Naive thymus-derived CD4-positive, alpha-beta T cell (primary cell): ENCODE measurements at regions of chr7 and their contacts with region 1.

Region 1: DNA sequence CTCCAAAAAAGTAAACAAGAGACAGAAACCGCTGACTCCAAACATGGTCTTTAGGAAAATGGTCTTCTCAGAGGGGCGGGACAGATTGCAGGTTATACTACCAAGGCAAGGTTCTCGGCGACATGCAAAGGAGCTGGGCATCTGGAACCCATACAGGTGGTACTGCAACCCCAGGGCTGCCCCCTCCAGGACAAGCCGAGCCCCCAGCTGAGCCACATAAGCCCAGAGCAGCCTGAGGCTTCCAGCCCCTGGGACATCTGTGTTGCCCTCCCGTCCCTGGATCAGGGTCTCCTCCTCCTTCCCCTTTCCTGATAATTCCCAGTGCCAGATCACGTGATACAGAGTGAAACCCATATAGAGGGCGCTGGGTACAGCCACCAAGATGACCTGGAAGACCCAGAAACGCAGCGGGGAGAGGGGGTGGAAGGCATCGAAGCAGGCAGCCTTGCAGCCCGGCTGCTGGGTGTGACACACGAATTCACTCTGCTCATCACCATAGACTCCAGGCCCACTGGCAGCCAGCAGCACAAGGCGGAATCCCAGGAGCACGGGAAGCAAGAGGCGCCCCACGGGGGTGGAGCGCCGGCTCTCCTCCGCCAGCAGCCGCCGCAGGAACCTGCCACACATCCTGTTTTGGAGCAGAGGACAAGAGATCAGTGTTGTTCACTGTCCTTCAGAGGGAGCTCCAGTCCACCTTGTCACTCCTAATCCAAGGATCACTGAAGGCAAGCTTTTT is at the start of gene GJC3:
- DNase-seq: peak in 8 of 9 donors; percentile 27 to 61 (median 52)
- ATAC-seq: peak; percentile 90
- H3K4me3 ChIP-seq: peak within 1 kb of the TSS; percentile 27
- H3K4me3 Mint-ChIP-seq: peak within 1 kb of the TSS; percentile 80 to 87 (median 84)
- H3K27ac ChIP-seq: peak within 1 kb of the TSS; percentile 29
- H3K27ac Mint-ChIP-seq: peak within 1 kb of the TSS; percentile 48 to 93 (median 85)
- H3K4me1 ChIP-seq: peaks cover 0 to 16% of the 10 kb centered on the region in 2 donors
- H3K4me1 Mint-ChIP-seq: peaks cover 17 to 33% (median 33%) of the 10 kb centered on the region in 7 donors
- H3K27me3 ChIP-seq: no peaks in the 10 kb centered on the region
- H3K27me3 Mint-ChIP-seq: peaks cover 0 to 44% (median 14%) of the 10 kb centered on the region in 5 donors
- total RNA-seq, gene GJC3: 0.41 to 1.1 (median 0.58) TPM in 4 of 5 experiments, not detected in the other

Region 2: DNA sequence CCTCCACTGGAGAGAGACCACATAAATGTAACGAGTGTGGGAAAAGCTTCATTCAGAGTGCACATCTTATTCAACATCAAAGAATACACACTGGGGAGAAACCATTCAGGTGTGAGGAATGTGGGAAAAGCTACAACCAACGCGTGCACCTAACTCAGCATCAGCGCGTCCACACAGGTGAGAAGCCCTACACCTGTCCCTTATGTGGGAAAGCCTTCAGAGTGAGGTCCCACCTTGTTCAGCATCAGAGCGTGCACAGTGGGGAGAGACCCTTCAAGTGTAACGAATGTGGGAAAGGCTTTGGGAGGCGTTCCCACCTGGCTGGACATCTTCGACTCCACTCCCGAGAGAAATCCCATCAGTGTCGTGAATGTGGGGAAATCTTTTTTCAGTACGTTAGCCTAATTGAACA is 397.8 kb before region 1 on chr7:
- CTCF ChIA-PET with region 1: no interaction called
- POLR2A ChIA-PET with region 1: no interaction called
- intact Hi-C with region 1: no loop called
- DNase-seq: no peak
- ATAC-seq: no peak
- H3K4me3 ChIP-seq: no peak overlapping the region
- H3K4me3 Mint-ChIP-seq: no peak overlapping the region
- H3K27ac ChIP-seq: no peak overlapping the region
- H3K27ac Mint-ChIP-seq: no peak overlapping the region
- H3K4me1 ChIP-seq: no peaks in the 10 kb centered on the region
- H3K4me1 Mint-ChIP-seq: no peaks in the 10 kb centered on the region
- H3K27me3 ChIP-seq: no peaks in the 10 kb centered on the region
- H3K27me3 Mint-ChIP-seq: no peaks in the 10 kb centered on the region

Region 3: DNA sequence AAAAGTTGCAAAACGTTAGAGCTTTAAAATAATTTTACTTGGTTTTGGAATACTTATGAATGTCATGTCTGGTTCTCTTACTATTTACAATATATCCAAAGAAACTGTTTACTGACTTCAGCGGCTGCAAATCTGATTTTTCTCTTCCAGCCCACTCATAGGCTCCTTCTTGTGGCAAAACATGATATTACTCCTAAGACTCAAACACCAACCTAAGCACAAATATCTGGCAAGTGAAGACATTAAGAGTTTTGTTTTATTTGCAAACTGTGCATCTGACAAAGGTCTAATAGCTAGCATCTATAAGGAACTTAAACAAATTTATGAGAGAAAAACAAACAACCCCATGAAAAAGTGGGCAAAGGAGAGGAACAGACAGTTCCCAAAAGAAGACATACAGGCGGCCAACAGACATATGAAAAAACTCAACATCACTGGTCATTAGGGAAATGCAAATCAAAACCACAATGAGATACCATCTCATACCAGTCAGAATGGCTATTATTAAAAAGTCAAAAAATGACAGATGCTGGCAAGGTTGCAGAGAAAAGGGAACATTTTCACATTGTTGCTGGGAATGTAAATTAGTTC is 20.6 kb after region 1 on chr7:
- CTCF ChIA-PET with region 1: interaction called, 14 read pairs
- POLR2A ChIA-PET with region 1: interaction called, 6 read pairs
- intact Hi-C with region 1: loop called in 1 of 2 experiments (anchors 1 kb)
- DNase-seq: peak in 5 of 9 donors; percentile 17 to 38 (median 28)
- ATAC-seq: no peak
- H3K4me3 ChIP-seq: no peak overlapping the region
- H3K4me3 Mint-ChIP-seq: no peak overlapping the region
- H3K27ac ChIP-seq: no peak overlapping the region
- H3K27ac Mint-ChIP-seq: no peak overlapping the region
- H3K4me1 ChIP-seq: no peaks in the 10 kb centered on the region
- H3K4me1 Mint-ChIP-seq: peaks cover 0 to 10% (median under 1%) of the 10 kb centered on the region in 7 donors
- H3K27me3 ChIP-seq: no peaks in the 10 kb centered on the region
- H3K27me3 Mint-ChIP-seq: peaks cover 0 to 14% (median 0%) of the 10 kb centered on the region in 5 donors

Region 4: DNA sequence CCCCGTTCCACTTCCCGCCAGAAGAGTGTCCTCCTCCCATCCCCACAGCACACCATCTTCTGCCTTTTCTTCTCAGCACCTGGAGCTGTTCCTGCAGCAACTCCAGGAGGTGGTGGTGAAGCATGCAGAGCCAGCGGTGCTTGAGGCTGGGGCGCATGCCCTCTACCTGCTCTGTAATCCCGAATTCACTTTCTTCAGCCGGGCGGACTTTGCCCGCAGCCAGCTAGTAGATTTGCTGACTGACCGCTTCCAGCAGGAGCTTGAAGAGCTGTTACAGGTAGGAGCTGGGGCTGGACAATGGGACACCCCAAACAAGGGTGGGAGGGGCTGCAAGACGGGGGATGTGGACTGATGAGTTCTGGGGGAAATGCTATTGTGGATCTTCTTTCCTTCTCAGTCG is 271.5 kb after region 1 on chr7:
- CTCF ChIA-PET with region 1: no interaction called
- POLR2A ChIA-PET with region 1: no interaction called
- intact Hi-C with region 1: no loop called
- DNase-seq: no peak
- ATAC-seq: no peak
- H3K4me3 ChIP-seq: no peak overlapping the region
- H3K4me3 Mint-ChIP-seq: no peak overlapping the region
- H3K27ac ChIP-seq: no peak overlapping the region
- H3K27ac Mint-ChIP-seq: peak overlapping the region in 1 of 9 donors; percentile 59
- H3K4me1 ChIP-seq: no peaks in the 10 kb centered on the region
- H3K4me1 Mint-ChIP-seq: peaks cover 0 to 16% (median under 1%) of the 10 kb centered on the region in 7 donors
- H3K27me3 ChIP-seq: no peaks in the 10 kb centered on the region
- H3K27me3 Mint-ChIP-seq: no peaks in the 10 kb centered on the region